ENCODE measurements at regions of chr7 and their contacts with region 1.

Region 1: DNA sequence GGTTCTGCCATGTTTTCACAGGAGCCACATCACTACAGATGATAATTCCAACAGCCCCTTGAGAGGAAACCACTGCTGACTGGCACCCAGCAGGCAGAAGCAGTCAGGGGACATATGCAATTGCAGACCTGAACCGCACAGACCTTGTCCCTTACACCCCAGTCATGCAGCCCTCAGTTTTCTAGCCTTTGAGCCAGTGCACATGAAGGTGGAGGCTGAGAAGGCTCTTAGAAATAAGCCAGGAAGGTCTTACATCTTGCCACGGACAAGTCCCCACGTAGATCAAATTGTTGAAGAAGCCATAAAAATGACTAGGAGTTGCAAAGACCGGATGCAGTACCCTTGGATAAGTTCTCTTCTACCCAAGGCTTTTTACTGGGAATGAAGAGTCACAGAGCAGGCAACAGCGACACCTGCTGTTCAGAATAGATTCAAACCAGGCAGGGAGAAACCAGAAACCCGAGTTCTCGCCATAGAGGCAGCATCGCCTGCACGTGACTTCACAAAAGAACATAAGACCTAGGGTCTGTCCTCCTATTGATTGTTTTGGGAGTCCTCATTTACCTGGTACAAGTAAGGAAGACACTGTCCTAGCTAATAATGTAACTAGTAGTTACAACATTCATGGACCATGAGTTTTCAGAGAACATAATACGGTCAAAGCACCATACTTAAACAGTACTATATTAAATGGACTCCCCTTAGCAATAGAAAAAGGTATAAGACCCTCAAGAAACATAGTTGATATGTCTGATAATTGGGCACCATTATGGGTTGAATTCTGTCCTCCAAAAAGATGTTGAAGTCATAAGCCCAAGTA is 11.1 kb downstream of the STEAP1B start:
- DNase-seq: peak; percentile 61
- CTCF ChIP-seq: peak; percentile 77

Region 2: GRCh38 chr7:22110227-22110839 is 378.5 kb before region 1 on chr7:
- in situ Hi-C with region 1: loop called (anchors 5 kb)
- DNase-seq: peak; percentile 74
- CTCF ChIP-seq: peak; percentile 85

Measured in GM13976 (cell line).